ENCODE measurements at regions of chr2 and their contacts with region 1.

Region 1: GRCh38 chr2:62178741-62179271 is 17.1 kb upstream of the B3GNT2 start:
- DNase-seq: no peak
- H3K4me3 ChIP-seq: no peak overlapping the region
- H3K27ac ChIP-seq: no peak overlapping the region
- H3K4me1 ChIP-seq: no peaks in the 10 kb centered on the region
- H3K27me3 ChIP-seq: no peaks in the 10 kb centered on the region
- CTCF ChIP-seq: no peak

Region 2: GRCh38 chr2:63124208-63124607 is 945.4 kb after region 1 on chr2:
- CTCF ChIA-PET with region 1: no interaction called
- POLR2A ChIA-PET with region 1: interaction called, 10 read pairs
- intact Hi-C with region 1: no loop called
- DNase-seq: no peak
- H3K4me3 ChIP-seq: no peak overlapping the region
- H3K27ac ChIP-seq: no peak overlapping the region
- H3K4me1 ChIP-seq: peaks cover 9% of the 10 kb centered on the region
- H3K27me3 ChIP-seq: no peaks in the 10 kb centered on the region
- CTCF ChIP-seq: no peak